ENCODE measurements at regions of chr16 and their contacts with region 1.

Region 1: GRCh38 chr16:81585785-81586184 is 141.2 kb downstream of the CMIP start:
- DNase-seq: peak; percentile 59
- H3K4me3 ChIP-seq: no peak overlapping the region
- H3K4me3 Mint-ChIP-seq: peak overlapping the region; percentile 48
- H3K27ac Mint-ChIP-seq: peak overlapping the region; percentile 93
- H3K4me1 ChIP-seq: peaks cover 56% of the 10 kb centered on the region
- H3K4me1 Mint-ChIP-seq: peaks cover 56% of the 10 kb centered on the region
- H3K27me3 ChIP-seq: no peaks in the 10 kb centered on the region
- H3K27me3 Mint-ChIP-seq: no peaks in the 10 kb centered on the region
- CTCF ChIP-seq: peak; percentile 37 to 46

Region 2: DNA sequence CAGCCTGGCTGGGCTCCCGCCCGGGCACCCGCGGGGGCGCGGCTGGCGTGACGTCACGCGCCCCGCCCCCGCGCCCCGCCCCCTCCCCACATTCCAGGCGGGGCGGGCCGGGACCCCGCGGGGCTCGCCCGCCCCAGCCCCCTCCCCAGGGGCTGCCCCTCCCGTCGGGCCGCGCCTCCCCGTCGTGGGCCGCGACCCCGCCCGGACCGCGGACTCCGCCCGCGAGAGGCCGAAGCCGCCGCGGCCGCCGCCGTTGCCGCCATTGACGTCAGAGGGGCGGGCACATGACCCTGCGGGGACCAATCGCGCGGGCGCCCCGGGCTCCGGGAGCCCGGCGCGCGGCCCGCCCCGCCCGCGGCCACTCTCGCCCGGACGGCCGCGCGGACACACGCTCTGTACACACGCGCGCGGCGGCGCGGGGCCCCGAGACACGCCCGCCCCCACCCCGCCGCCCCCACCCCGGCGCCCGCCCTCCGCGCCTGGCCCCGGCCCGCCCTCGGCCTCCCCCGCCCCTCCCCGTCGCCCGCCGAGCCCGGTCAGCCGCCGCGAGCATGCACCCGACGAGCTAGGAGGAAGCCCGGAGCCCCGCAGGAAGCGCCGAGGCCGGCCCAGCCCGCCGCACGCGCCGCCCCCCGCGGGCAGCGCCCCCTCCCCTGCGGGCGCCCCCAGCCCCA is 141.2 kb before region 1 on chr16 and contains the start of gene CMIP:
- CTCF ChIA-PET with region 1: interaction called, 3 read pairs
- POLR2A ChIA-PET with region 1: no interaction called
- intact Hi-C with region 1: loop called (anchors 1 kb)
- DNase-seq: peak; percentile 89 to 96
- H3K4me3 ChIP-seq: peak within 1 kb of the TSS; percentile 92
- H3K4me3 Mint-ChIP-seq: peak within 1 kb of the TSS; percentile 84
- H3K27ac Mint-ChIP-seq: peak within 1 kb of the TSS; percentile 93
- H3K4me1 ChIP-seq: peaks cover 55% of the 10 kb centered on the region
- H3K4me1 Mint-ChIP-seq: peaks cover 34% of the 10 kb centered on the region
- H3K27me3 ChIP-seq: no peaks in the 10 kb centered on the region
- H3K27me3 Mint-ChIP-seq: no peaks in the 10 kb centered on the region
- CTCF ChIP-seq: no peak
- total RNA-seq, gene CMIP: 63.7 and 68.0 TPM in 2 replicates

Region 3: DNA sequence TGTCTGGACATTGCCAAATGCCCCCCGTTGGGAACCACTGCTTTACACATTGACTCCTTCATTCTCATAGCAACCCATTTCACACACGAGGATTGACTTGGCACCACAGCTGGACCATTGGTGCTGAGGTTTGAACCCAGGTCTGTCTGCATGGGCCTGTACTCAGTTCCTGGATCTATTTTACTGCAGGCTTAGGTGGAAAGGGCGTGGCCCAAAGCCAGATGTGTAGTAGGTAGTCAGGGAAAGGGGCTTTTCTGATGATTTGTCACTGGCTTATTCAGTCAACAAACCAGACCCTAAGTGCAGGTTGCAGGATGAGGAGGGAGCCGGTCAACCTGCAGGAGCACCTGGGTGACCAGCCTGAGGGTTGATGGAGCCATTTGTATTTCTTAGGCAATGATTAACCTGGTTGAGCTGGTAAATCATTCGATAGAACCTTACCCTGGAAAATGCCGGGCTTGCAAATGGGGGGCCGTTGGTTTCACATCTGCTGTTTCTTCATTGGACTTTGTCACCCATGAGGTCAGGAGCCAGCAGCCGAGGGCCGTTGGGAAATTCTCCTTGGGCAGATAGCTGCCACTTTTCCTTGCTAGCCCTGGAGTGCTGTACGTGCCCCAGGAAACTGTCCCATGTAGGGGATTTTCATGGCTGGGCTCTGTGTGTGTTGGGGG is 36.8 kb before region 1 on chr16:
- CTCF ChIA-PET with region 1: interaction called, 5 read pairs
- POLR2A ChIA-PET with region 1: no interaction called
- intact Hi-C with region 1: loop called (anchors 2 kb)
- DNase-seq: peak; percentile 93
- H3K4me3 ChIP-seq: peak overlapping the region; percentile 13; the same call in 1 of the 2 replicates
- H3K4me3 Mint-ChIP-seq: peak overlapping the region; percentile 66
- H3K27ac Mint-ChIP-seq: peak overlapping the region; percentile 92
- H3K4me1 ChIP-seq: peaks cover 50% of the 10 kb centered on the region
- H3K4me1 Mint-ChIP-seq: peaks cover 53% of the 10 kb centered on the region
- H3K27me3 ChIP-seq: no peaks in the 10 kb centered on the region
- H3K27me3 Mint-ChIP-seq: no peaks in the 10 kb centered on the region
- CTCF ChIP-seq: no peak

Region 4: DNA sequence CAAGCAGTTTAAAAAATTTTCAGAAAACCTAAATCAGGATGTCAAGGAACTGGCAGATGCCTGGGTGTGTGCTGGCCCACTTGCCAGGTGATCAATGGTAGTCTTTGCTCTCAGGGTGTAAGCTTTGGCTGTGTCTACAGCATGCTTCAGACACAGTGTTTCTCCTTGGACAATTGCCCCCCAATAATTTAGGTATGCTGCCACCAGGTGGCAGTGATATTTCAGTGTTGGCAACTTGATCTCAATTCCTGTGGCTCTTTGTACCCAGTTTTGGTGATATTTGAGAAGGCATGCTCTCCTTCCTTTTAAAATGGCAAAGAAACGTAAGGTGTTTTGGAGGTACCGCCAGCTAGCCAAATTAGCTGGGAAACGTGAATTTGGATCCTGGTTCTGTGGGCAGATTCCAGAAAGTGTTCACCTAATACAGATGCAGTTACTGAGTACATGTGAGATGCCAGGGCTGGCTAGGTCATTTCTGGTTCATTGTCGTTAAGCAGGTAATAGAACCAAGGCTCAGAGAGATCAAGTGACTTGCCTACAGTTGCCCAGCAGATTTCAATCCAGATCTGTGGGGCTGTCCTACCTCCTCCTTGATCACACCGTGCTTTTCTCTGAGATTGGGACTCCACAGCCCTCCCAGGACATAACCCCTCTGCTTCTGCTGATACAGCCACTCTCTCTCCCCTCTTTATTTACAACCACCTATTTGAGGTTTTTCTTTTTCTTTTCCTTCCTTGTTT is 37.7 kb after region 1 on chr16:
- CTCF ChIA-PET with region 1: no interaction called
- POLR2A ChIA-PET with region 1: no interaction called
- intact Hi-C with region 1: no loop called
- DNase-seq: peak in 1 of 2 experiments; percentile 54
- H3K4me3 ChIP-seq: no peak overlapping the region
- H3K4me3 Mint-ChIP-seq: no peak overlapping the region
- H3K27ac Mint-ChIP-seq: no peak overlapping the region
- H3K4me1 ChIP-seq: no peaks in the 10 kb centered on the region
- H3K4me1 Mint-ChIP-seq: no peaks in the 10 kb centered on the region
- H3K27me3 ChIP-seq: no peaks in the 10 kb centered on the region
- H3K27me3 Mint-ChIP-seq: no peaks in the 10 kb centered on the region
- CTCF ChIP-seq: peak; percentile 57 to 64

Region 5: DNA sequence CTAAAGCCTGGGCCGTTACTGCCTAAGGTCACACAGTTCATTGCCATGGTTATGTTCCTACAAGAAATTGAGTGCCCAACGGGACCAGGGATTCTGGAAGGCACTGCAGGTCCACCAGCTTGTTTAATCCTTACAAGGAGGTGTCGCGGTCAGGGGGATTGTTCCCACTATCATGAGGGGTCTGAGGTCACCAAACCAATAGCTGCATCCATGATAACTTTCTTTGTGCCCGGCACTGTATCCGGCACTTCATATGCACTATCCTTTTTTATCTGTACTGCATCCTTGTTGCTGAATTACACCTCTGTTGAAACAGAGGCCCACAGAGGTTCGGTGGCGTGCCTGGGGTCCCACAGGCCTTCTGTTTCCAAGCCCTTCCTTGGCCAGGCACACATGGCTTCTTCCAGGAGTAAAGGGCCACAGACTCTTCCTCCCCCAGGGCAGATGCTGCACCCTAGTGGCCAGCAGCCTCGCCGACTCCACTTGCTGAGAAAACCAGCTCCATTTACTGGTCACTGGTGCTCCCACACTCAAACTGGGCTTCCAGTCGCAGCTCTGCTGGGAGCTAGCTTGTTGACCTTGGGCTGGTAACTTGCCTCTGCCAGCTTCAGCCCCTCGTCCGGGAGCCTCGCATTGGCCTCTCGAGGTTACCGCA is 111.3 kb after region 1 on chr16:
- CTCF ChIA-PET with region 1: interaction called, 5 read pairs
- POLR2A ChIA-PET with region 1: no interaction called
- intact Hi-C with region 1: loop called (anchors 5 kb)
- DNase-seq: peak; percentile 67 to 76
- H3K4me3 ChIP-seq: no peak overlapping the region
- H3K4me3 Mint-ChIP-seq: no peak overlapping the region
- H3K27ac Mint-ChIP-seq: no peak overlapping the region
- H3K4me1 ChIP-seq: no peaks in the 10 kb centered on the region
- H3K4me1 Mint-ChIP-seq: no peaks in the 10 kb centered on the region
- H3K27me3 ChIP-seq: no peaks in the 10 kb centered on the region
- H3K27me3 Mint-ChIP-seq: no peaks in the 10 kb centered on the region
- CTCF ChIP-seq: peak; percentile 74 to 91

Measured in Caco-2 (cell line).